ENCODE measurements at regions of chr5 and their contacts with region 1.

Region 1: GRCh38 chr5:31036411-31036810 is 157.1 kb upstream of the CDH6 start:
- DNase-seq: no peak
- H3K4me3 ChIP-seq: no peak overlapping the region
- H3K27ac ChIP-seq: no peak overlapping the region
- H3K4me1 ChIP-seq: no peaks in the 10 kb centered on the region
- H3K27me3 ChIP-seq: no peaks in the 10 kb centered on the region
- CTCF ChIP-seq: no peak
- POLR2A ChIP-seq: no peak

Region 2: GRCh38 chr5:30937070-30937469 is 99.3 kb before region 1 on chr5:
- intact Hi-C with region 1: loop called (anchors 10 kb)
- DNase-seq: no peak
- H3K4me3 ChIP-seq: no peak overlapping the region
- H3K27ac ChIP-seq: no peak overlapping the region
- H3K4me1 ChIP-seq: no peaks in the 10 kb centered on the region
- H3K27me3 ChIP-seq: no peaks in the 10 kb centered on the region
- CTCF ChIP-seq: no peak
- POLR2A ChIP-seq: no peak

Region 3: GRCh38 chr5:31113101-31113500 is 76.7 kb after region 1 on chr5:
- intact Hi-C with region 1: no loop called
- DNase-seq: no peak
- H3K4me3 ChIP-seq: no peak overlapping the region
- H3K27ac ChIP-seq: no peak overlapping the region
- H3K4me1 ChIP-seq: no peaks in the 10 kb centered on the region
- H3K27me3 ChIP-seq: no peaks in the 10 kb centered on the region
- CTCF ChIP-seq: no peak
- POLR2A ChIP-seq: no peak

Region 4: GRCh38 chr5:31516802-31517201 is 480.4 kb after region 1 on chr5:
- intact Hi-C with region 1: no loop called
- DNase-seq: no peak
- H3K4me3 ChIP-seq: no peak overlapping the region
- H3K27ac ChIP-seq: no peak overlapping the region
- H3K4me1 ChIP-seq: no peaks in the 10 kb centered on the region
- H3K27me3 ChIP-seq: no peaks in the 10 kb centered on the region
- CTCF ChIP-seq: no peak
- POLR2A ChIP-seq: no peak